Sciatic nerve (tissue), 2 donors: ENCODE measurements at regions of chr7 and their contacts with region 1.

Region 1: DNA sequence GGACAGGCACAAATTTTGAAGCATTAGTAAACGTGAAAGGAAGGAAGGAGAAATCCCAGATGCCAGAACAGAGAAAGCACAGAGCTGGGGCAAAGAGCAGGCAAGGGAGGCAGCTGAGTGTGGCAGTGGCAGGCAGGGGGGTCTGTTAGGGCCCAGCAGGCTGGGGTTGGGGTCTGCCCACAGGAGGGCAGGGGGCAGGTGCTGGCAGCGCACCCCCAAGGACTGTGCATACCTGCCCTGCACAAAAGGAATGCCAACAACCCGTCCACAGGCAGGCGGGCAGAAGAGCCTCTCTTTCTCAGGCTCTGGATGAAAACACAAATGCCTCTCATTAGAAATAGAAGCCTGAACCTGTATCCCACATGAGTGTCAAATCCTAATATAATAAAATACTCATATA is 552.3 kb downstream of the PTPRN2 start:
- DNase-seq: no peak
- ATAC-seq: no peak

Region 2: DNA sequence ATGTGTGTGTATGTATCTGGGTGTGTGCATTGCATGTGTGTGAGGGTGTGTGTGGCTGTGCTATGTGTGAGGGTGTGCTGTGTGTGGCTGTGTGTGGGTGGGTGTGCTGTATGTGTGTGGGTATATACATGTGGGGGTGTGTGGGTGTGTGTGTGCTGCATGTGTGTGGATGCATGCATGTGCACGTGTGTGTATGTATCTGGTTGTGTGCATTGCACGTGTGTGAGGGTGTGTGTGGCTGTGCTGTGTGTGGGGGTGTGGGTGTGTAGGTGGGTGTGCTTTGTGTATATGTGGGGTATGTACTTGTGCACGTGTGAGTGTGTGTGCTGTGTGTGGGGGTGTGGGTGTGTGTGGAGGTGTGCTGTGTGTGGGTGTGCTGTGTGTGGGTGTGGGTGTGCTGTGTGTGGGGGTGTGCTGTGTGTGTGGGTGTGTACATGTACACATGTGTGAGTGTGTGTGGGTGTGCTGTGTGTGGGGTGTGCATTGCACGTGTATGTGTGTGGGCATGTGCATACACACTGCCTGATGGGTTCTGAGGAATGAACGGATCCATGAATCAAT is 27.6 kb before region 1 on chr7:
- intact Hi-C with region 1: loop called (anchors 1 kb)
- DNase-seq: no peak
- ATAC-seq: no peak